ENCODE measurements at regions of chr21 and their contacts with region 1.

Region 1: GRCh38 chr21:29298348-29299045 is at the start of gene BACH1:
- DNase-seq: peak; percentile 76
- ATAC-seq: peak; percentile 83
- H3K4me3 ChIP-seq: peak within 1 kb of the TSS; percentile 73 to 83 (median 82)
- H3K27ac ChIP-seq: peak within 1 kb of the TSS; percentile 92
- H3K4me1 ChIP-seq: peaks cover 57% of the 10 kb centered on the region
- H3K27me3 ChIP-seq: no peaks in the 10 kb centered on the region; a peak in 1 of 5 replicates
- CTCF ChIP-seq: peak; percentile 56
- EP300 ChIP-seq: no peak
- POLR2A ChIP-seq: peak; percentile 88 to 89
- RAD21 ChIP-seq: peak; percentile 70
- total RNA-seq, gene BACH1: 51.7 and 68.9 TPM in 2 replicates

Region 2: DNA sequence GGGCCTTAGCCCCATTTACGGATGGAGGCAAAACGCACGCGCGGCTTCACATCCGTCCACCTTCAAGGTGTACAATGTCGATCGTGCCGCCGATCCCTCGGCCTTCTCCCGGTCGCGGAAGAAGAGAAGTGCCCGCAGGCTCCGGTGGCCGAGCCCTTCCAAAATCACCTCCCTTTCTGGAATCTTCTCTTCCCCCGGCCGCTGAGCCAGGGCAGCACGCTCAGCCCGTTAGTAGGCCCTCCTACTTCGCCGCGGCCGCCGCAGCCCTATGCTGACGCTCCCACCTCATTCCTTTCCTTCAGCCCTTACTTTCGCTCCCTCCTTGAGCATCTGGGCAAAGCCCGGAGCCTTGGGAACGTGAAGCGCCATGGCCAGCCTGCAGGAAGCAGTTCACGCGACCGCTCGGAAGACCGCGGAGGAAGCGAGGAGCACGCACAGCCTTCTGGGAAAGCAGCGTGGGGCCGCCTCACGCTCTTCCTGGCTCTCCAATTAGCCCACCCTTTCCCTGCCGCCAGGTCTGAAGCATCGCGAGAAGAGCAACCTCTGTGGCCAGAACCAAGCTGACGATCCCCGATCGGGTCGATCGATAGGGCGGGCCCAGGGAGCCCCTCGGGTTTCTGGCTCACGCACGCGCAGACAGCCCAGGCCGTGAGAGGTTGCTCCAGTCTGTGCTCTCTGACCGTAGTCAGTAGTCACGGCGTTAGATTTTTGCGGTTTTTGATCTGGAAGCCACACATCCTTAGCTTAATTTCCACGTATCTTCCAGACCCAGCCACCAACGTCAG is 225.1 kb before region 1 on chr21 and contains the start of gene CCT8:
- CTCF ChIA-PET with region 1: no interaction called
- POLR2A ChIA-PET with region 1: no interaction called
- in situ Hi-C with region 1: no loop called
- intact Hi-C with region 1: loop called (anchors 1 kb)
- DNase-seq: peak; percentile 98
- ATAC-seq: peak; percentile 98
- H3K4me3 ChIP-seq: peak within 1 kb of the TSS; percentile 94 to 95 (median 94)
- H3K27ac ChIP-seq: peak within 1 kb of the TSS; percentile 88
- H3K4me1 ChIP-seq: peaks cover 38% of the 10 kb centered on the region
- H3K27me3 ChIP-seq: no peaks in the 10 kb centered on the region; a peak in 1 of 5 replicates
- CTCF ChIP-seq: peak; percentile 11; the same call in 1 of the 2 replicates
- EP300 ChIP-seq: no peak
- POLR2A ChIP-seq: peak; percentile 95 to 97
- RAD21 ChIP-seq: no peak; the same call in 1 of the 2 replicates
- total RNA-seq, gene CCT8: 325 and 538 TPM in 2 replicates

Region 3: DNA sequence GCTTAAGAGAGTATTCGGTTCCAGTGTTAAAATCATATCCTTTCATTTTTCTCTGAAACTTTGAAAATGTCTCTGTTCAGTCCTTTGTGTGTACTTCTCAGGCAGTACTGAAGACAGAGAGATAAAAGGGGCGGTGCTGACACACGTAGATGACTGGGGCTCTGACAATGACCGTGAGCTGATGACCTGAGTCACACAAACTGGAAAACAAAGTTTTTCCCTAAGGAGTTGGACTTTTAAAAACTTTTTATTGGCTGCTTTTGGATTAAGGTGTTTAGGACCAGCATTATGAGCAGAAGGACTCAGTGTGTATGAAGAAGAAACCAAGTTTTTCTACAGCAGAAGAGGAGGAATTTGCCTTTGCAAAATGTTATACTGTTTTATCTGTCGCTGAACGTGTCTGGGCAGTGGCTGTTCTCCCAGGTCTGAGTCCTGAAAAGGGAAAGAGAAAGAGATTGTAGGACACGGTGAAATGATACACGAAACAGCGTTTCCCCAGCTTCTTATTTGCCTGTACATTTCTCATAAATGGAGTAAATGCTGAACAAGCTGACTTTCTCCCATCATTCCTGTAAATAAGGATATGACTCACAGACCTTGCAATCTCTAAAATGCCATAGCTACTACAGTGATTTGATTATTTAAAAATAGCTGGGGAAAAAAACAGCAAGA is 116.6 kb before region 1 on chr21:
- CTCF ChIA-PET with region 1: no interaction called
- POLR2A ChIA-PET with region 1: interaction called, 4 read pairs
- in situ Hi-C with region 1: loop called (anchors 10 kb)
- intact Hi-C with region 1: no loop called
- DNase-seq: peak; percentile 40
- ATAC-seq: peak; percentile 71; the same call in 2 of the 3 replicates
- H3K4me3 ChIP-seq: peak overlapping the region in 1 of 3 experiments; percentile 21; a peak in 1 of 6 replicates
- H3K27ac ChIP-seq: no peak overlapping the region
- H3K4me1 ChIP-seq: peaks cover 28% of the 10 kb centered on the region
- H3K27me3 ChIP-seq: no peaks in the 10 kb centered on the region
- CTCF ChIP-seq: no peak
- EP300 ChIP-seq: no peak; a peak in 1 of 4 replicates
- POLR2A ChIP-seq: no peak
- RAD21 ChIP-seq: no peak

Region 4: DNA sequence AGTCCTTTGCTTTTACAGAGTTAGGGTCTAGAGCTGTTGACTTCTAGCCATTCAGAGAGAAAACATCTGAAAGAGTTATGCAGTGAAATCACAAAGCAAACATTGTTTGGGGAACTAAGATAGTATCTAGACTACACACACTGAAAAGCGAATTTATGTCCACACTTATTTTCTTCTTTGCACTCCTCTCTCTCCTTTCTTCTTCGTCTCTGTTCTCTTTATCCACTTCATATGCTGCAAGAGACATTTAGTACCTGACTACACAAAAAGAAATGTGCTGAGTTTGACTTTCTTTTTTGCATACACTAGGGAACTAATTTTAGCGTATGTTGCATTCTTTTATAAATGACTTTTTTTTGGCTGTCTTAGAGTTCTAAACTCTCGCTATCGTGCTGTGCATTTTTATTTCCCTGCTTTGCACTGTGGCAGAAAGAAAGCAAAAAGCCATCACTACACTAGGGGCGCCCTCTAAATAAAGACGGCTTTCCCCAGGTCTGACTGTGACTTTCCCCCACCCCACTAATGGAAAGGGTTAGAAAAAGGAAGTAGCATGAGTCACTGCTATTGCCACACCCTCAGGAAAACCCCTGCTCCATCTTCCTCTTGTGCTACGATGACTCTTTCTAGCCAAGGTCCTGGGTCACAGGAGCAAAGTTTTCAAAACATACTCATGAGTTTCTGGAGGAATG is 102.4 kb before region 1 on chr21:
- CTCF ChIA-PET with region 1: no interaction called
- POLR2A ChIA-PET with region 1: no interaction called
- in situ Hi-C with region 1: no loop called
- intact Hi-C with region 1: loop called (anchors 10 kb)
- DNase-seq: peak; percentile 70
- ATAC-seq: peak; percentile 74
- H3K4me3 ChIP-seq: no peak overlapping the region
- H3K27ac ChIP-seq: no peak overlapping the region
- H3K4me1 ChIP-seq: peaks cover 41% of the 10 kb centered on the region
- H3K27me3 ChIP-seq: no peaks in the 10 kb centered on the region; a peak in 1 of 5 replicates
- CTCF ChIP-seq: no peak
- EP300 ChIP-seq: peak in 1 of 2 experiments; percentile 52; a peak in 1 of 4 replicates
- POLR2A ChIP-seq: no peak
- RAD21 ChIP-seq: no peak

Region 5: GRCh38 chr21:29208682-29209059 is 89.8 kb before region 1 on chr21:
- CTCF ChIA-PET with region 1: no interaction called
- POLR2A ChIA-PET with region 1: no interaction called
- in situ Hi-C with region 1: no loop called
- intact Hi-C with region 1: no loop called
- DNase-seq: no peak
- ATAC-seq: no peak
- H3K4me3 ChIP-seq: no peak overlapping the region
- H3K27ac ChIP-seq: no peak overlapping the region
- H3K4me1 ChIP-seq: no peaks in the 10 kb centered on the region
- H3K27me3 ChIP-seq: no peaks in the 10 kb centered on the region; a peak in 1 of 5 replicates
- CTCF ChIP-seq: no peak
- EP300 ChIP-seq: no peak
- POLR2A ChIP-seq: no peak
- RAD21 ChIP-seq: no peak

Region 6: DNA sequence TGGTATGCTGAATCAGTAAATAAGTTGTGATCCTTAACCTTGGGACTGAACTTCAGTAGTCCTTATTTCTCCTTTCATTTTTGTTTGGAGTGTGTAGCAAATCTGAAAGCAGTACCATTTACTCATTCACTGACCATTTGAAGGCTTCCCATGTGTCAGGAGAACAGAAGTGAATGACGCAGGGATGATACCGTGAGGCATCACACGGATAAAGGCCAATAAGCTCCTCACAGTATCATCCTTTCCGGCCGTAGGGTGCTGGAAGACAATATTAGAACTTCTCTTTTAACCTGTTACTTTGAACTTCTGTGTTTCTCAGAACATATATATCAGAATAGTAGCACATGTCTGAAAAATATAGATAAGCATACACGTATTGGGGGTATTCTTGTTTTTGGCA is 21.5 kb after region 1 on chr21:
- CTCF ChIA-PET with region 1: no interaction called
- POLR2A ChIA-PET with region 1: no interaction called
- in situ Hi-C with region 1: no loop called
- intact Hi-C with region 1: no loop called
- DNase-seq: no peak
- ATAC-seq: no peak
- H3K4me3 ChIP-seq: no peak overlapping the region
- H3K27ac ChIP-seq: no peak overlapping the region
- H3K4me1 ChIP-seq: peaks cover 24% of the 10 kb centered on the region
- H3K27me3 ChIP-seq: no peaks in the 10 kb centered on the region
- CTCF ChIP-seq: no peak
- EP300 ChIP-seq: no peak
- POLR2A ChIP-seq: no peak
- RAD21 ChIP-seq: no peak

Region 7: DNA sequence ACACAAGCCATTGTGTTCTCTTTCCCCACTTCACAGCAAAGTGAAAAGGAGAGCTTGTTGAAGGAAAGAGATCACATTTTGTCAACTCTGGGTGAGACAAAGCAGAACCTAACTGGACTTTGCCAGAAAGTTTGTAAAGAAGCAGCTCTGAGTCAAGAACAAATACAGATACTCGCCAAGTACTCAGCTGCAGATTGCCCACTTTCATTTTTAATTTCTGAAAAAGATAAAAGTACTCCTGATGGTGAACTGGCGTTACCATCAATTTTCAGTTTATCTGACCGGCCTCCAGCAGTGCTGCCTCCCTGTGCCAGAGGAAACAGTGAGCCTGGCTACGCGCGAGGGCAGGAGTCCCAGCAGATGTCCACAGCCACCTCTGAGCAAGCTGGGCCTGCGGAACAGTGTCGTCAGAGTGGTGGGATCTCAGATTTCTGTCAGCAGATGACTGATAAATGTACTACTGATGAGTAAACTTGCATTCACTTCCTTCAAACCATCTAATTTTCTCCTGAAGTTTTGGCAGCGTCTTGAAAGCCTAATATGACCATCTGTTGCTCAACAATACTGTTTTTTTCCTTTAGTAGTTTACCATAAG is 44.0 kb after region 1 on chr21:
- CTCF ChIA-PET with region 1: no interaction called
- POLR2A ChIA-PET with region 1: no interaction called
- in situ Hi-C with region 1: no loop called
- intact Hi-C with region 1: loop called (anchors 5 kb)
- DNase-seq: no peak
- ATAC-seq: no peak
- H3K4me3 ChIP-seq: no peak overlapping the region
- H3K27ac ChIP-seq: no peak overlapping the region
- H3K4me1 ChIP-seq: peaks cover 14% of the 10 kb centered on the region
- H3K27me3 ChIP-seq: no peaks in the 10 kb centered on the region
- CTCF ChIP-seq: no peak
- EP300 ChIP-seq: no peak
- POLR2A ChIP-seq: no peak
- RAD21 ChIP-seq: no peak

Measured in HepG2 (cell line).